ENCODE measurements at regions of chr12 and their contacts with region 1.

Region 1: GRCh38 chr12:64669270-64669842 is 59.1 kb downstream of the RASSF3 start:
- DNase-seq: peak; percentile 41
- ATAC-seq: peak; percentile 78
- H3K4me3 ChIP-seq: peak overlapping the region; percentile 21
- H3K27ac ChIP-seq: peak overlapping the region; percentile 18
- H3K4me1 ChIP-seq: peaks cover 55% of the 10 kb centered on the region
- H3K27me3 ChIP-seq: no peaks in the 10 kb centered on the region
- CTCF ChIP-seq: no peak

Region 2: GRCh38 chr12:64608901-64609535 is 60.3 kb before region 1 on chr12:
- CTCF ChIA-PET with region 1: no interaction called
- POLR2A ChIA-PET with region 1: interaction called, 4 read pairs
- intact Hi-C with region 1: loop called (anchors 5 kb)
- DNase-seq: peak; percentile 86
- ATAC-seq: peak; percentile 54
- H3K4me3 ChIP-seq: peak overlapping the region; percentile 69
- H3K27ac ChIP-seq: peak overlapping the region; percentile 78
- H3K4me1 ChIP-seq: peaks cover 10% of the 10 kb centered on the region; the same call in 1 of the 2 replicates
- H3K27me3 ChIP-seq: no peaks in the 10 kb centered on the region
- CTCF ChIP-seq: no peak

Region 3: GRCh38 chr12:64631197-64631596 is 38.2 kb before region 1 on chr12:
- CTCF ChIA-PET with region 1: no interaction called
- POLR2A ChIA-PET with region 1: no interaction called
- intact Hi-C with region 1: no loop called
- DNase-seq: no peak
- ATAC-seq: no peak
- H3K4me3 ChIP-seq: no peak overlapping the region
- H3K27ac ChIP-seq: no peak overlapping the region
- H3K4me1 ChIP-seq: peaks cover 26% of the 10 kb centered on the region
- H3K27me3 ChIP-seq: no peaks in the 10 kb centered on the region
- CTCF ChIP-seq: no peak

Region 4: GRCh38 chr12:64679487-64679983 is 10.2 kb after region 1 on chr12:
- CTCF ChIA-PET with region 1: interaction called, 16 read pairs
- POLR2A ChIA-PET with region 1: no interaction called
- intact Hi-C with region 1: loop called (anchors 1 kb)
- DNase-seq: peak; percentile 90
- ATAC-seq: peak; percentile 82
- H3K4me3 ChIP-seq: peak overlapping the region; percentile 65
- H3K27ac ChIP-seq: peak overlapping the region; percentile 93
- H3K4me1 ChIP-seq: peaks cover 44% of the 10 kb centered on the region
- H3K27me3 ChIP-seq: no peaks in the 10 kb centered on the region
- CTCF ChIP-seq: no peak

Region 5: DNA sequence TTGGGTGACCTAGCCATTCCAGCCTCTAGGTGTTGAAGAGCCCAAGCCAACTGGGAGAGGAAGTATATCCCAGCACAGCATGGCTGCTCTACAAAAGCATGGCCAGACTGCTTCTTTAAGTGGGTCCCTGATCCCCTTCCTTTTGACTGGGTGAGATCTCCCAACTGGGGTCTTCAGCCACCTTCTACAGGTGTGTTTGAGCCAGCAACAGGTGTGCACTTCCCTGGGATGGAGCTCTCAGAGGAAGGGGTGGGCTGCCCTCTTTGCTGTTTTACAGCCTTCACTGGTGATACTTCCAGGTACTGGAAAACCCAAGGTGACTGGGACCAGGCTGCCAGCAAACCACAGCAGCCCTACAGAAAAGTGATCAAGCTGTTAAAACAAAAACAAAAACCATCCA is 104.0 kb after region 1 on chr12:
- CTCF ChIA-PET with region 1: no interaction called
- POLR2A ChIA-PET with region 1: interaction called, 12 read pairs
- intact Hi-C with region 1: no loop called
- DNase-seq: no peak
- ATAC-seq: no peak
- H3K4me3 ChIP-seq: no peak overlapping the region
- H3K27ac ChIP-seq: no peak overlapping the region
- H3K4me1 ChIP-seq: no peaks in the 10 kb centered on the region
- H3K27me3 ChIP-seq: no peaks in the 10 kb centered on the region
- CTCF ChIP-seq: no peak